CD14-positive monocyte (primary cell): ENCODE measurements at regions of chr18 and their contacts with region 1.

Region 1: DNA sequence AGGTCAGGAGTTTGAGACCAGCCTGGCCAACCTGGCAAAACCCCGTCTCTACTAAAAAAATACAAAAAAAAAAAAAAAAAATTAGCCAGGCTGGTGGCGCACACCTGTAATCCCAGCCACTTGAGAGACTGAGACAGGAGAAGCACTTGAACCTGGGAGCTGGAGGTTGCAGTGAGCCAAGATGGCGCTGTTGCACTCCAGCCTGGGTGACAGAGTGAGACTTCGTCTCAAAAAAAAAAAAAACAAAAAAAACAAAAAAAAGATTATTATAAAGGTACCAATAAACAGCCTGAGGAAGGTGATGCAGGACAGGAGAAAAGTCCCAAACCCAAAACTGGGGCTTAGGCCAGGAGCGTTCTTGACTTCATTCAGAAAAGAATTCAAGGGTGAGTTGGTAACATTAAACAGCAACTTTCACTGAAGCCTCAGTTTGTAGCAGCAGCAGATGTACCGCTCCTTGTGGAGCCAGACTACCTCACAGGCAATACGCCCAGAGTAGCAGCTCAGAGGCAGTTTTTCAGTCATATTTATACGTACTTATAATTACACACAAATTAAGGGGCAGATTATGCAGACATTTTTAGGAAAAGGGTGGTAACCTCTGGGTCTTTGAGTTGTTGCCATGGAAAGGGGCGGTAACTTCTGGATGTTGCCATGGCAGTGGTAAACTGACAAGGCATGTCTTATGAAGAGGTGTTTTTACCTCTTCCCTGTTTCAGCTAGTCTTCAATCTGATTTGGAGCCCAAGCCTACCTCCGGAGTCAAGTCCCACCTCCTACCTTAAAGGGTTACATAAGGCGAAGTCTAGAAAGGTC is 1596.6 kb upstream of the CELF4 start:
- DNase-seq: no peak
- H3K4me3 ChIP-seq: no peak overlapping the region
- H3K4me3 Mint-ChIP-seq: no peak overlapping the region
- H3K27ac ChIP-seq: no peak overlapping the region
- H3K27ac Mint-ChIP-seq: no peak overlapping the region
- H3K4me1 ChIP-seq: no peaks in the 10 kb centered on the region
- H3K4me1 Mint-ChIP-seq: no peaks in the 10 kb centered on the region
- H3K27me3 ChIP-seq: no peaks in the 10 kb centered on the region
- H3K27me3 Mint-ChIP-seq: no peaks in the 10 kb centered on the region
- CTCF ChIP-seq: no peak

Region 2: GRCh38 chr18:39105104-39105503 is 57.1 kb before region 1 on chr18:
- intact Hi-C with region 1: loop called in 1 of 2 experiments (anchors 10 kb)
- DNase-seq: no peak
- H3K4me3 ChIP-seq: no peak overlapping the region
- H3K4me3 Mint-ChIP-seq: no peak overlapping the region
- H3K27ac ChIP-seq: no peak overlapping the region
- H3K27ac Mint-ChIP-seq: no peak overlapping the region
- H3K4me1 ChIP-seq: no peaks in the 10 kb centered on the region
- H3K4me1 Mint-ChIP-seq: no peaks in the 10 kb centered on the region
- H3K27me3 ChIP-seq: no peaks in the 10 kb centered on the region
- H3K27me3 Mint-ChIP-seq: peaks cover 0 to 1% (median 0%) of the 10 kb centered on the region in 3 donors
- CTCF ChIP-seq: no peak

Region 3: GRCh38 chr18:39299191-39299590 is 137.0 kb after region 1 on chr18:
- intact Hi-C with region 1: no loop called
- DNase-seq: no peak
- H3K4me3 ChIP-seq: no peak overlapping the region
- H3K4me3 Mint-ChIP-seq: no peak overlapping the region
- H3K27ac ChIP-seq: no peak overlapping the region
- H3K27ac Mint-ChIP-seq: no peak overlapping the region
- H3K4me1 ChIP-seq: no peaks in the 10 kb centered on the region
- H3K4me1 Mint-ChIP-seq: peaks cover 4% of the 10 kb centered on the region
- H3K27me3 ChIP-seq: no peaks in the 10 kb centered on the region
- H3K27me3 Mint-ChIP-seq: no peaks in the 10 kb centered on the region
- CTCF ChIP-seq: no peak